ENCODE measurements at regions of chr12 and their contacts with region 1.

Region 1: DNA sequence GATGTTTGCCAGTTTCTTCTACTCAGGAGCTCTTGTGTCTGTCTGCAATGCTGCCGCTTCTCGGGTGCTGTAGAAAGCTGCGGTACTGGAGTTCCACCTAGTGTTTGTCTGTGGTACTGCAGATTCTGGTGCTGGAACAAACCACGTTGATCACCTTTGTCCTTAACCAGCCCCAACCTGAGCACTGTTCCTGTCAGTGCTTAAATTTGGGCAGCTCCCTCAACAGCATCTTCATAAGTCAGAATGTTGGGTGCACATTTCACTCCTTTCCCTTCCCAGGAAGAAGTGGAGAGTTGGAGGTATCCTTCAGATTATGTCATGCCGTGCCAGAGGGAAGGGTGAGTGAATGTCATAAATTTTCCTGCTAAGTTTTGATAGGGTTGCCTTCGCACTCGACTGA is 48.7 kb upstream of the LALBA start:
- DNase-seq: peak; percentile 71
- H3K4me3 Mint-ChIP-seq: no peak overlapping the region
- H3K27ac Mint-ChIP-seq: no peak overlapping the region
- H3K4me1 Mint-ChIP-seq: peaks cover 7% of the 10 kb centered on the region
- H3K27me3 Mint-ChIP-seq: peaks cover 23% of the 10 kb centered on the region

Region 2: DNA sequence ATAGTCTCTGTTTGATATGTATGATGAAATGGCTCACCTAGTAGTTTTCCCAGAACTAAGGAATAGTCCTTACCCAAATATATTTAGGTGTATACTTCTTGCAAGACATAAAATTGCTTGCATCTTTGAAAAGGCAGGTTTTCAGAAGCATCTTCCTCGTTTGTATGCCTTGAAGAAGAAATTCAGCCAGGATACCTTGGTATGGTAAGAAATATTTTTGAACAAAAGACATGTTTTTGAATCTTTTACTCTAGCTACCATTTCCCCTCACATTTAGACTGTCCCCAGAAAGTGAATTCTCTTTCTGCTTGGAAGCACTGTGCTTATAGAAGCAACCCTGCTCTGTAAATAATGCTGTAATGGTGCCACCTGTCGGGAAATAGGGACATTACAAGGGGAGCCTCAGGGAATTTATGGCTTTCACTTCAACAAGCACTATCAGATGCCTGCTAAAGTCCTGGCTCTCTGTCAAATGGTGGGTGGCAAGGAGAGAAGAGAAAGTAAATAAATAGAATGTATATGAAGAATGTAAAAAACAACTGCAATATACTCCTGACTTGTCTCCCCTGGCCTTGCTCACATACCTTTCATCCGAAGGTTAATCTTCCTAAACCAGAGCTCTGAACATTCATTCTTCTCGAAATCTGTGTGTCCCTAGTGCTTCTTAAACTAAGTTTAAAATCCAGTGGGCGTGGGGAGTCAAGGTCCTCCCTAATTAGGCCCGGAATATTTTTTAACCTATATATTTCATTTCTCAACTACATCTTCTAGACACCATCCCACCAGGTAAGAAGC is 429.0 kb before region 1 on chr12:
- intact Hi-C with region 1: loop called (anchors 2 kb)
- DNase-seq: peak; percentile 60
- H3K4me3 Mint-ChIP-seq: no peak overlapping the region
- H3K27ac Mint-ChIP-seq: no peak overlapping the region
- H3K4me1 Mint-ChIP-seq: peaks cover 13% of the 10 kb centered on the region
- H3K27me3 Mint-ChIP-seq: peaks cover 59% of the 10 kb centered on the region

Region 3: GRCh38 chr12:48542300-48542928 is 76.1 kb before region 1 on chr12:
- intact Hi-C with region 1: loop called (anchors 1 kb)
- DNase-seq: no peak
- H3K4me3 Mint-ChIP-seq: no peak overlapping the region
- H3K27ac Mint-ChIP-seq: no peak overlapping the region
- H3K4me1 Mint-ChIP-seq: peaks cover 5% of the 10 kb centered on the region
- H3K27me3 Mint-ChIP-seq: no peaks in the 10 kb centered on the region

Region 4: DNA sequence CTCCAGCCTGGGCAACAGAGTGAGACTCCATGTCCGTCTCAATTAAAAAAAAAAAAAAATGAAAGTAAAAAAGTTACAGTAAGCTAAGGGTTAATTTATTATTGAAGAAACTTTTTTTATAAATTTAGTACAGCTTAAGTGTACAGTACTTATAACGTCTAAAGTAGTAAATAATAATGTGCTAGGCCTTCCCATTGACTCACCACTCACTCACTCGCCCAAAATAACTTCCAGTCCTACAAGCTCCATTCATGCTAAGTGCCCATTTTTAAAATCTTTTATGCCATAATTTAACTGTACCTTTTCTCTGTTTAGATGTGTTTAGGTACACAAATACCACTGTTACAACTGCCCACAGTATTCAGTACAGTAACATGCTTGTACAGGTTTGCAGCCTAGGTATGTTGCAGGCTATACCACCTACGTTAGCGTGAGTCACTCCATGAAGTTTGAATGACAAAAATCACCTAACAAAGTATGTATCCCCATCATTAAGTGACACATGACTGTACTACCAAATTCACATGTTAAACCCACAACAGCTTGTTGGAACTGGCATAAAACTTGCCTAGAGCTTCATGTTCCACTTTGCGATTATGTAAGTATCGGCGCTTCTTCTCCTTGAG is 52.8 kb after region 1 on chr12:
- intact Hi-C with region 1: no loop called
- DNase-seq: no peak
- H3K4me3 Mint-ChIP-seq: no peak overlapping the region
- H3K27ac Mint-ChIP-seq: peak overlapping the region; percentile 19
- H3K4me1 Mint-ChIP-seq: peaks cover 6% of the 10 kb centered on the region
- H3K27me3 Mint-ChIP-seq: no peaks in the 10 kb centered on the region

Region 5: GRCh38 chr12:48696626-48697025 is 78.1 kb after region 1 on chr12:
- intact Hi-C with region 1: no loop called
- DNase-seq: no peak
- H3K4me3 Mint-ChIP-seq: no peak overlapping the region
- H3K27ac Mint-ChIP-seq: no peak overlapping the region
- H3K4me1 Mint-ChIP-seq: peaks cover 18% of the 10 kb centered on the region
- H3K27me3 Mint-ChIP-seq: no peaks in the 10 kb centered on the region

Region 6: GRCh38 chr12:48788854-48789796 is 170.6 kb after region 1 on chr12 and contains the start of gene ADCY6:
- intact Hi-C with region 1: no loop called
- DNase-seq: no peak
- H3K4me3 Mint-ChIP-seq: peak within 1 kb of the TSS; percentile 58
- H3K27ac Mint-ChIP-seq: no peak within 1 kb of the TSS
- H3K4me1 Mint-ChIP-seq: no peaks in the 10 kb centered on the region
- H3K27me3 Mint-ChIP-seq: peaks cover 50% of the 10 kb centered on the region
- total RNA-seq, gene ADCY6: 0.32 and 0.78 TPM in 2 replicates